ENCODE measurements at regions of chr6 and their contacts with region 1.

Region 1: GRCh38 chr6:8180327-8181159 is 78.2 kb upstream of the EEF1E1 start:
- DNase-seq: no peak
- H3K4me3 ChIP-seq: peak overlapping the region in 1 of 4 experiments; percentile 46; a peak in 3 of 8 replicates
- H3K27ac ChIP-seq: no peak overlapping the region
- H3K4me1 ChIP-seq: peaks cover 3 to 10% (median 8%) of the 10 kb centered on the region in 4 experiments; a peak in 5 of 7 replicates
- H3K27me3 ChIP-seq: no peaks in the 10 kb centered on the region
- CTCF ChIP-seq: no peak
- EP300 ChIP-seq: no peak; a peak in 1 of 3 replicates
- POLR2A ChIP-seq: no peak
- RAD21 ChIP-seq: peak; percentile 6 to 20; a peak in 1 of 4 replicates

Region 2: DNA sequence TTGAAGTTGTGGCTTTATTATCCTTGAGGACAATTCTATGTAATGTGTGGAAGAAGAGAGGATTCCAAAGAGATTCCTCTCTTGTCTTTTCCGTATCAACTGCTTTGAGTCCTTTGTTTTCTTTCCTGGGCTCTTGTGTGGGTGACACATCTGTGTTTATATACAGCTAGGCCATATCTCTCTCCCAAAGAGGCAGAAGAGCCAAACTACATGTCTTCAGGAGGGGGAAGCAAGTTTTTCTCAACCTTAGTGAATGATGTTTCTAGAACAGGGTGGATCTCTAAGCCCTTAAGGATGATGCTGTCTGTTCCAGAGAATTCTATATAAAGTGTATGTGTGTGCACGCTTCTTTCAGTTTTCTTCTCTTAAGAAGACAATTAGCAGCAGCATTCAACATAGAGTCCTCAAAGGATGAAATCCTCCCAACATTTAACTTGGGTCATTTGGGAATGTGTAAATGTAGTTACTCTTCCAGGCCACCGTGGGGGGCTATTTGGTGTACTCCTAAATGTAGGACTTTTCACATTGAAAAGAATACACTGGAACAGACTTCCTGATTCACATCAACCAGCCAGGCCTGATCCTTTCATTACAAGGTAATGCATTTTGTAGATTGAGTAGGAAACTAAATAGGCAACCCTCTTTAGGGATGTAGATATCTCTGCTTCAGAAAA is 14.6 kb after region 1 on chr6:
- CTCF ChIA-PET with region 1: interaction called, 25 read pairs
- POLR2A ChIA-PET with region 1: no interaction called
- DNase-seq: no peak
- H3K4me3 ChIP-seq: no peak overlapping the region
- H3K27ac ChIP-seq: no peak overlapping the region
- H3K4me1 ChIP-seq: peaks cover 1 to 11% (median 7%) of the 10 kb centered on the region in 4 experiments; a peak in 5 of 7 replicates
- H3K27me3 ChIP-seq: no peaks in the 10 kb centered on the region
- CTCF ChIP-seq: peak in 2 of 3 experiments; percentile 29 to 45; a peak in 2 of 4 replicates
- EP300 ChIP-seq: no peak
- POLR2A ChIP-seq: no peak
- RAD21 ChIP-seq: peak; percentile 39 to 56